IMR-90 (cell line): ENCODE measurements at regions of chr11 and their contacts with region 1.

Region 1: GRCh38 chr11:2892215-2893020 is 6.8 kb upstream of the CDKN1C start:
- DNase-seq: peak; percentile 50
- ATAC-seq: peak; percentile 79
- H3K4me3 ChIP-seq: peak overlapping the region; percentile 44
- H3K27ac ChIP-seq: peak overlapping the region; percentile 89
- H3K4me1 ChIP-seq: peaks cover 26% of the 10 kb centered on the region
- H3K27me3 ChIP-seq: no peaks in the 10 kb centered on the region
- CTCF ChIP-seq: peak; percentile 80
- POLR2A ChIP-seq: 0 out of 2 replicates have a peak, but pooled peaks have one; percentile 35
- RAD21 ChIP-seq: peak; percentile 82

Region 2: GRCh38 chr11:2196970-2197770 is 695.2 kb before region 1 on chr11:
- CTCF ChIA-PET with region 1: no interaction called
- POLR2A ChIA-PET with region 1: no interaction called
- dilution Hi-C with region 1: no loop called
- in situ Hi-C with region 1: loop called (anchors 25 kb)
- intact Hi-C with region 1: loop called (anchors 10 kb)
- DNase-seq: peak; percentile 38
- ATAC-seq: peak; percentile 93
- H3K4me3 ChIP-seq: no peak overlapping the region
- H3K27ac ChIP-seq: no peak overlapping the region
- H3K4me1 ChIP-seq: no peaks in the 10 kb centered on the region
- H3K27me3 ChIP-seq: peaks cover 17% of the 10 kb centered on the region; the same call in 1 of the 2 replicates
- CTCF ChIP-seq: peak; percentile 81
- POLR2A ChIP-seq: no peak
- RAD21 ChIP-seq: peak; percentile 86

Region 3: GRCh38 chr11:2791521-2792380 is 100.7 kb before region 1 on chr11:
- CTCF ChIA-PET with region 1: no interaction called
- POLR2A ChIA-PET with region 1: no interaction called
- dilution Hi-C with region 1: no loop called
- in situ Hi-C with region 1: no loop called
- intact Hi-C with region 1: no loop called
- DNase-seq: no peak
- ATAC-seq: no peak
- H3K4me3 ChIP-seq: no peak overlapping the region
- H3K27ac ChIP-seq: no peak overlapping the region
- H3K4me1 ChIP-seq: no peaks in the 10 kb centered on the region
- H3K27me3 ChIP-seq: peaks cover 51% of the 10 kb centered on the region
- CTCF ChIP-seq: no peak
- POLR2A ChIP-seq: no peak
- RAD21 ChIP-seq: no peak

Region 4: DNA sequence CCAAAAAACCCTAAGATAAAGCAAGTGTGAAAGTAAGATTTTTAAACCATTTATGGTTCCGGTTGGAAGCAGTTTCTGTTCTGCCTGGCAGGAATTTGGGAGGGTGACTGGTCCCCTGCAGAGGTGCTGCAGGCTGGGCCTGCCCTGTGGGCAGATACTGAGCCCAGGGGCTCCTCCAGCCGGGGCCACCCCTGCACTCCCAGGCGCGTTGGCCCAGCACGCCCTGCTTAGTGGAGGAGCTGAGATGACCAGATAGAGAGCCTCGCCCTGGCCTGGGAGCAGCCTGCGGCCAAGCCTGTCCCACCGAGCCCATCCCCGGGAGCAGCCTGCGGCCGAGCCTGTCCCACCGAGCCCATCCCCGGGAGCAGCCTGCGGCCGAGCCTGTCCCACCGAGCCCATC is 28.8 kb after region 1 on chr11:
- CTCF ChIA-PET with region 1: no interaction called
- POLR2A ChIA-PET with region 1: no interaction called
- dilution Hi-C with region 1: no loop called
- in situ Hi-C with region 1: no loop called
- intact Hi-C with region 1: no loop called
- DNase-seq: no peak
- ATAC-seq: no peak
- H3K4me3 ChIP-seq: no peak overlapping the region
- H3K27ac ChIP-seq: no peak overlapping the region
- H3K4me1 ChIP-seq: no peaks in the 10 kb centered on the region
- H3K27me3 ChIP-seq: no peaks in the 10 kb centered on the region
- CTCF ChIP-seq: no peak
- POLR2A ChIP-seq: no peak
- RAD21 ChIP-seq: no peak

Region 5: DNA sequence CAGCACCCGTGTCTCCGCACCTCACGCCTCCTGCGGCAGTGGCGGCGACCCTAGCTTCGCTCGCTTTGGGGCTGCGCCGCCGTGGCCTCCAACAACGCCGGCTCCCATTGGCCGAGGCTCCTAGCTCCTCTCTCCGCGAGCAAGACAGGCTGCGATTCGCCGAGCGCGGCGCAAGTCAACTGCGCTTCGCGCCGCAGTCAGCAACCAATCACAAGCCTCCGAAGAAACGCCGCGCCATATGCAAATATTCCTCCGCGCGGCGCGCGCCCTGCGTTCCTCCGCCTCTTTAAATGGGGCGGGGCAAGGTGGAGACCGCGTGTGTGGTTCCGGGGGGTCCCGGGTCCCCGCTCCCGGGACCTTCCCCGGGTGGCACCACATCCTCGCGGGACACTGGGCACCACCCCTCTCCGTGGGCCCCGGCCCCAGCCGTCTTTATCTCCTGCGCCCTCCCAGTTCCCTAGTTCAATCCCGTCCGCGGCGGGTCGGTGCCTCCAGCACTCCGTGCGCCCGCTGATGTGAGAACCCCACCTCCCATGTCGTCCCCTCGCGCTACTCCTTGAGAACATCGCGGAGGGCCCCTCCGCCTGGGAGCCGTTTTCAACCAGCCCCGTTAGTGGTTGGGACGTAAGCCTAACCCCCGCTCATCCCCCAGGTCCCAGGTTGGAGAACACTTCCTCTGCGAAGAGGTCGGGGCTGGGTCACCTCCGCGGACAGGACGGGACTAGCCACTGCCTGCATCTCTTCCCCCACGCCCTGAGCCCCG is 100.0 kb after region 1 on chr11 and contains the start of gene NAP1L4:
- CTCF ChIA-PET with region 1: no interaction called
- POLR2A ChIA-PET with region 1: no interaction called
- dilution Hi-C with region 1: no loop called
- in situ Hi-C with region 1: no loop called
- intact Hi-C with region 1: loop called (anchors 5 kb)
- DNase-seq: peak; percentile 95
- ATAC-seq: peak; percentile 91
- H3K4me3 ChIP-seq: peak within 1 kb of the TSS; percentile 92
- H3K27ac ChIP-seq: peak within 1 kb of the TSS; percentile 92
- H3K4me1 ChIP-seq: peaks cover 10% of the 10 kb centered on the region
- H3K27me3 ChIP-seq: no peaks in the 10 kb centered on the region
- CTCF ChIP-seq: no peak
- POLR2A ChIP-seq: peak; percentile 73
- RAD21 ChIP-seq: no peak
- total RNA-seq, gene NAP1L4: 71.5 and 80.8 TPM in 2 replicates

Region 6: DNA sequence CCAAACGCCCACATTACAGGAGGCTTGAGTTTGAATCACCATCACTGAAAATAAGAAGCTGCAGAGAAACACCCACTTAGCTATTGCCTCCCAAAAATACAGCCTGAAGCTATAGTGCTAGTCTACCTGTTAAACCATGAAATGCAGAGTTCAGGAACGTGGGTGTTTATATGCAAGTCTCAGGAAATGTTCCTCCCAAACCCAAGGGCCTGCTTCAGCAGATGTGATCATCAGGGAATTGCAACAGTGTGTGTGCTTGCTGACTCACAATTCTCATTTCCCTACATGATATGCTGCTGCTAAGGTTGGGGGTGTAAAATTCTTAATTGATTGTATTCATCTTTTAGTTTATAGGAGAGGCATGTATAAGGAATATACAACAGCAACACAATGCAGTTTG is 855.3 kb after region 1 on chr11:
- CTCF ChIA-PET with region 1: no interaction called
- POLR2A ChIA-PET with region 1: no interaction called
- dilution Hi-C with region 1: no loop called
- in situ Hi-C with region 1: no loop called
- intact Hi-C with region 1: no loop called
- DNase-seq: peak; percentile 89
- ATAC-seq: peak; percentile 97
- H3K4me3 ChIP-seq: no peak overlapping the region
- H3K27ac ChIP-seq: peak overlapping the region; percentile 42; the same call in 1 of the 2 replicates
- H3K4me1 ChIP-seq: peaks cover 3% of the 10 kb centered on the region; the same call in 1 of the 2 replicates
- H3K27me3 ChIP-seq: no peaks in the 10 kb centered on the region
- CTCF ChIP-seq: no peak
- POLR2A ChIP-seq: no peak
- RAD21 ChIP-seq: no peak